ENCODE measurements at regions of chr16 and their contacts with region 1.

Region 1: GRCh38 chr16:71412270-71413160 is 29.3 kb downstream of the TLE7 start:
- DNase-seq: no peak
- ATAC-seq: peak; percentile 86

Region 2: GRCh38 chr16:71499775-71500364 is 87.4 kb after region 1 on chr16:
- intact Hi-C with region 1: loop called (anchors 2 kb)
- DNase-seq: no peak
- ATAC-seq: peak; percentile 61

Region 3: GRCh38 chr16:71594000-71594646 is 181.6 kb after region 1 on chr16:
- intact Hi-C with region 1: no loop called
- DNase-seq: no peak
- ATAC-seq: no peak

Region 4: DNA sequence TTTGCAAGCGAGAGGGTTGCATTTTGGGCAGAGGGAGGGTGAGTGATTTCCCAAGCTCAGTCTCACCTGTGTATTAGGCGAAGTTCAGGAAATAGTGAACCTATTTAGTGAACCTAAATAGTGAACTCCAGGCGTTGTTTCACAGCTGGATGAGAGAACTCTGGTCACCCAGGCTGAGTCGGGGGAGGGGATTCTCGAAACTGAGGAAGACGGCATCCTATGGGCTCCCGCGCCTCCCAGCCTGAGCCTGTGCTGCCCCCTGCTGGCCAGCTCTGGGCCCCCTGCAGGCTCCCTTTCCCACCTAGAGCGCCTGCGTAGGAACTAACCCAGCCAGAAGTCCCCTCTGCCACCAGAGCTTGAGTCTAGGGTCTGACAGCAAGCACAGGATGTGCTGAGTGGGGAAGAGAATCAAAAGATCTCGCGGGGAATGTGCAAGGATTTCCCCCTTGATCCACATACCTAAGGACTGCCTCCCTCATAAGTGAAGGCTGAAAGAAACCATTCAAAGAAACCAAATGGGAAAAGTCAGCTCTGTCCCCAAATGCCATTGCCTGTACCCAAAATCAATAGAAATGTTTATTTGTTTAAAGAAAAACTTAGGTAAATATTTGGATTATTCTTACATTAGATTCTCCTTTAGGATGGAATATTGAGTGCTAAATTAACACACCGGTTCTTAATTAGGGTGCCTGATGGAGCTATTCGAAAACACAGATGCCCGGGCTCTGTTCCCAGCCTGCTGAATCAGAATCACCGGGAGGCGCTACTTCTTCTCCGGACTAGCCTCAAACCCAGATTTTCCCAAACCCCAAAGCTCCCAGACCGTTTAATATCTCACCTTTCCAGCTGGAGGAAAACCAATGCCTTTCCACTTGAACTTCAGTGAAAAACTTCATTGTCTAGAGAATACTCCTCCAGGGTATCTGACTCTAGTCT is 198.7 kb after region 1 on chr16:
- intact Hi-C with region 1: loop called (anchors 5 kb)
- DNase-seq: peak; percentile 67
- ATAC-seq: peak; percentile 75

Region 5: DNA sequence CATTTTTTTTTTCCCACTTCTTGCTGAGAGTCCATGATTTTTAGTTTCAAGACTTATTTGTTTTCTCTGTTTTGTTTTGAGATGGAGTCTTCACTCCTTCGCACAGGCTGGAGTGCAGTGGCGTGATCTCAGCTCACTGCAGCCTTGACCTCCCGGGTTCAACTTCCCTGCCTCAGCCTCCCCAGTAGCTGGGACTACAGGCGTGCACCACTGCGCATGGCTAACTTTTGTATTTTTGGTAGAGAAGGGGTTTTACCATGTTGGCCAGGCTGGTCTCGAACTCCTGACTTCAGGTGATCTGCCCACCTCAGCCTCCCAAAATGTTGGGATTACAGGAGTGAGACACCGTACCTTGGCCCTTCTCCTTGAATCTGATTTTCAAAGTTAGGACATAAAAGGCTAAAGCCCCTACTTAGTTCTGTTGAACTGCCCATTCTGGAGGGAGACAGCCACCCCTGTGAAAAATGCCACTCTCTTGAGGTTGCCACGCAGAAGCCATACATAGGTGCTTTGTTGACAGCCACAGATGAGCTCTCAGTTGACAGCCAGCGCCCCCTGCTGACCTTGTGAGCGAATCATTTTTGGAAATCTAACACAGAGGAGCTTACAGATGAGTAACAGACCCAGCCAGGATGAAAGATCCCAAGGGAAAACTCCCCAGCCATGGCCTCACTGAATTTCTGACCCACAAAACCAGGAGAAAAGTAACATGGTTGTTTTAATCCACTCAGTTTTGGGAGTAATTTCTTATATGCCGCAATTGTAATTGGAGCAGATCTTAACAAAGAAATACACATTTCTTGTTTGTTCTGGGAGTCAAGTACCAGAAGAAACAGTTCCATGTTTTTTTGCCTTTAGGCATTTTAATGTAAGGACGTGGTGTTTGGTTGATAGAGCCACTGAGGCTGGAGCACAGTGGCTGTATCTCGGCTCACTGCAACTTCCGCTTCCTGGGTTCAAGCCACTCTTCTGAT is 548.8 kb after region 1 on chr16:
- intact Hi-C with region 1: loop called (anchors 10 kb)
- DNase-seq: peak; percentile 87
- ATAC-seq: peak; percentile 98

Measured in Right ventricle myocardium superior (tissue), 1 donor.